A549 (cell line): ENCODE measurements at regions of chr1 and their contacts with region 1.

Region 1: DNA sequence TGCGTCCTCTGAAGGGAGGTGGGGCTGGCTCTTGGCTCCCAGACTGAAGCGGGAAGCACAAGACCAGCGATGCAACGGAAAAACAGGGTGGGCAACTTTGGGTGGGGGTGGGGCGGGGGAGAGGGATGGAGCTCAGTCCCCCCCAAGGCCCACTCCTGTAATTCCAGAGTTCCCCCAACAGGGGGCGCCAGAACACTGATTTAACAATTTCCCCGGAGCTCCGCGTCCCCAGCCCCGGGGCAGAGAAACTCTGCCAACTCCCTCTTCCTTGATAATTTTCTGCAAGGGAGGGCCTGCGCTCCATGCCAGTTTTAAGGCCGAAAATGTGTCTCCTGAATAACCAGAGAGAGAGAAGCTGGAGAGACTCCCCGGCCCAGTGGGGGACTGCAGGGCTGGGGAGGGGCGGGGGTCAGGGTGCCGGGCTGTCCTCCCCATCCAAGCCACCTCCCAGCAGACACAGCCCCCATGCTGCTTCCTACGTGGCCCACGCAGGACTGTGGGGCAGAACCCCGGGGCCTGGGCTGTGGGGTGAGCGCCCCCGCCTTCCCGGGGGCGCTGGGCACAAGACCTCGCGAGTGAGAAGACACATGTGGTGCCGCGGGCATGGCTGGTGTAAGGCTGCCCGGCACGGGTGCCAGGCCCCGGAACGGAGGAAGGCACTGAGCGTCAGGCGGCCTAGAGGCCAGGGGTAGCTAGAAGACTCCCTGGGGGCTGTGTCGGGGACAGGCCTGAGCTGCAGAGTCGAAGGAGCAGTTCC is 51.4 kb downstream of the KIF21B start:
- DNase-seq: peak; percentile 37 to 76
- ATAC-seq: peak in 1 of 2 experiments; percentile 47; a peak in 3 of 6 replicates
- H3K4me3 ChIP-seq: no peak overlapping the region
- H3K27ac ChIP-seq: peak overlapping the region; percentile 63 to 76
- H3K4me1 ChIP-seq: peaks cover 31% of the 10 kb centered on the region
- CTCF ChIP-seq: peak; percentile 89
- EP300 ChIP-seq: no peak
- POLR2A ChIP-seq: no peak
- RAD21 ChIP-seq: peak; percentile 77 to 90

Region 2: GRCh38 chr1:200856716-200857352 is 115.3 kb before region 1 on chr1:
- CTCF ChIA-PET with region 1: no interaction called
- POLR2A ChIA-PET with region 1: no interaction called
- DNase-seq: no peak
- ATAC-seq: no peak
- H3K4me3 ChIP-seq: no peak overlapping the region
- H3K27ac ChIP-seq: no peak overlapping the region
- H3K4me1 ChIP-seq: no peaks in the 10 kb centered on the region
- CTCF ChIP-seq: no peak
- EP300 ChIP-seq: no peak
- POLR2A ChIP-seq: no peak
- RAD21 ChIP-seq: no peak

Region 3: GRCh38 chr1:200890818-200891773 is 81.0 kb before region 1 on chr1:
- CTCF ChIA-PET with region 1: interaction called, 57 read pairs
- POLR2A ChIA-PET with region 1: interaction called, 6 read pairs
- DNase-seq: peak; percentile 78 to 82
- ATAC-seq: peak; percentile 49 to 68
- H3K4me3 ChIP-seq: peak overlapping the region; percentile 68
- H3K27ac ChIP-seq: peak overlapping the region; percentile 100
- H3K4me1 ChIP-seq: peaks cover 51% of the 10 kb centered on the region
- CTCF ChIP-seq: peak; percentile 87
- EP300 ChIP-seq: no peak
- POLR2A ChIP-seq: peak; percentile 43
- RAD21 ChIP-seq: peak; percentile 61 to 77

Region 4: GRCh38 chr1:200931776-200932175 is 40.4 kb before region 1 on chr1:
- CTCF ChIA-PET with region 1: interaction called, 11 read pairs
- POLR2A ChIA-PET with region 1: no interaction called
- DNase-seq: no peak
- ATAC-seq: no peak
- H3K4me3 ChIP-seq: no peak overlapping the region
- H3K27ac ChIP-seq: no peak overlapping the region
- H3K4me1 ChIP-seq: no peaks in the 10 kb centered on the region
- CTCF ChIP-seq: no peak
- EP300 ChIP-seq: no peak
- POLR2A ChIP-seq: no peak
- RAD21 ChIP-seq: no peak

Region 5: GRCh38 chr1:200959411-200959921 is 12.7 kb before region 1 on chr1:
- CTCF ChIA-PET with region 1: interaction called, 51 read pairs
- POLR2A ChIA-PET with region 1: no interaction called
- DNase-seq: no peak
- ATAC-seq: peak in 1 of 2 experiments; percentile 72; a peak in 3 of 6 replicates
- H3K4me3 ChIP-seq: no peak overlapping the region
- H3K27ac ChIP-seq: no peak overlapping the region
- H3K4me1 ChIP-seq: no peaks in the 10 kb centered on the region
- CTCF ChIP-seq: no peak
- EP300 ChIP-seq: no peak
- POLR2A ChIP-seq: no peak
- RAD21 ChIP-seq: no peak

Region 6: DNA sequence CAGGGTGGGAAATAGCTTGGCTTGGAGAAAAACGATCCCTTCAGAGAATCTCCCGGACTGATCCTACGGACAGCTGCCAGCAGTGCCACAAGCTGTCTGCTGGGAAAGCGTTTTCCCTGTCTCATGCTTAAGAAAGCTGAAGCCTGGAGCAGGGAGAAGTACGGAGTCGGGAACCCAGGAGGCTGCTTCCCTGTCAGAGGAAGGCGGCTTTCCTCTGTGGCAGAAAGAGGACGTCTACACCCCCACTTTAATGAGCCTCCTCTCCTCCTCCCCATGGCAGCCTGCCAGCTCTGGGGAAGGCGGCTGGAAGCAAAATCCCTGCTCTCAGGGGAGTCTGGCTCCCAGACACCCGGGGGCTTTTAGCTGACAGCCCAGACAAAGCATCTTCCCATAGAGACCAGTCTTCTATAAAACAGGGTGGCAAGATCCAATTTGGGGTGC is 44.1 kb after region 1 on chr1:
- CTCF ChIA-PET with region 1: interaction called, 48 read pairs
- POLR2A ChIA-PET with region 1: no interaction called
- DNase-seq: no peak
- ATAC-seq: no peak
- H3K4me3 ChIP-seq: no peak overlapping the region
- H3K27ac ChIP-seq: peak overlapping the region; percentile 18 to 96; a peak in 3 of 6 replicates
- H3K4me1 ChIP-seq: peaks cover 65% of the 10 kb centered on the region
- CTCF ChIP-seq: no peak
- EP300 ChIP-seq: no peak
- POLR2A ChIP-seq: no peak
- RAD21 ChIP-seq: no peak

Region 7: GRCh38 chr1:201050515-201051277 is 78.6 kb after region 1 on chr1:
- CTCF ChIA-PET with region 1: interaction called, 28 read pairs
- POLR2A ChIA-PET with region 1: no interaction called
- DNase-seq: no peak
- ATAC-seq: no peak
- H3K4me3 ChIP-seq: no peak overlapping the region
- H3K27ac ChIP-seq: no peak overlapping the region
- H3K4me1 ChIP-seq: no peaks in the 10 kb centered on the region
- CTCF ChIP-seq: no peak
- EP300 ChIP-seq: no peak
- POLR2A ChIP-seq: no peak
- RAD21 ChIP-seq: no peak

Region 8: DNA sequence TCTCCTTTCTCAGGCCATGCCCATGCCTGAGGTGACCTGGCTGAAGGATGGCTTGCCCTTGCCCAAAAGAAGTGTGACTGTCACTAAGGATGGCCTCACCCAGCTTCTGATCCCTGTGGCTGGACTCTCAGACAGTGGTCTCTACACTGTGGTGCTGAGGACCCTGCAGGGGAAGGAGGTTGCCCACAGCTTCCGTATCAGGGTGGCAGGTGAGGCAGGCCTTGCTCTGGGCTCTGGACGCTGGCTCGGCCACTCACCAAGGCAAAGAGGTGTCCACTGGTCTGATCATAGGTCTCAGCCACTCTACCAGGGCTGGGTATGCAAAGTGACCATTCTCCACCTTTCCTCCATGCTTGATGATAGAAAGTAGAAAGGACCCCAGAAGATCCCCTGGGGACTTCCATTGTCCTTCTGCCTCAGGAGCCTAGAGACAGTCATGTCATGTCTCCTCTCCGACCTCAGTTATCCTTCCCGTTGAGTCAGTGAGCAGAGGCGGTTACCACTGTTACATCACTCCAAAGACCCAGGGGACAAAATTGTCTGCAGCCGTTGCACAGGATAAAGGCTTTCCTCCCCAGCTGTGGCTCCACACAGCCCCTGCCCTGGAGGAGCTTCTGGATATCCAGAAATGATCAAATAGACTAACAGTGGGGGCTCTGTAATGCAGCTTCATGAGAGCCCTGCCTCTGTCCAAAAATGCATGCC is 252.7 kb after region 1 on chr1:
- CTCF ChIA-PET with region 1: interaction called, 16 read pairs
- POLR2A ChIA-PET with region 1: no interaction called
- DNase-seq: no peak
- ATAC-seq: no peak
- H3K4me3 ChIP-seq: no peak overlapping the region
- H3K27ac ChIP-seq: no peak overlapping the region
- H3K4me1 ChIP-seq: 0 out of 3 replicates have a peak, but pooled peaks cover 4% of the 10 kb centered on the region
- CTCF ChIP-seq: no peak
- EP300 ChIP-seq: no peak
- POLR2A ChIP-seq: no peak
- RAD21 ChIP-seq: no peak

Region 9: DNA sequence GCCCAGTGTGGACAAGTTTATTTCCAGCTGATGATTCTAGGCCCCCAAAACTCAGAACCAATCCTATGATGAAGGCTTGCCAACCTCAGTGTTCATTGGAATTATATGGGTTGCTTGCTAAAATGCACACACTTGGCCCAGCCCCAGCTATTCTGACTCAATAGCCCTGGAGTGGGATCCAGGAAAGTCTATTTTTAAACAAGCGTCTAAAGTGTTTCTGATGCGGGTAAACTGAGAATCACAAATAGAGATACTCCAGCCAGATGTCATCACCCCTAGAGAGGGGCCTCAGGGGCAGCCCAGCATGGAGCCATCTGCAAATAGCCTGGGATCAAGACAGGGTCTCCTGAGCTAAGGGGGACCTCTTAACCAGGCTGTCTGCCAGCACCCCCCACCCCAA is 357.2 kb after region 1 on chr1:
- CTCF ChIA-PET with region 1: no interaction called
- POLR2A ChIA-PET with region 1: no interaction called
- DNase-seq: no peak
- ATAC-seq: no peak
- H3K4me3 ChIP-seq: no peak overlapping the region
- H3K27ac ChIP-seq: no peak overlapping the region
- H3K4me1 ChIP-seq: no peaks in the 10 kb centered on the region
- CTCF ChIP-seq: no peak
- EP300 ChIP-seq: no peak
- POLR2A ChIP-seq: no peak
- RAD21 ChIP-seq: no peak